ENCODE measurements at regions of chr9 and their contacts with region 1.

Region 1: GRCh38 chr9:94681508-94681907 is 42.2 kb upstream of the FBP1 start:
- DNase-seq: peak; percentile 84
- ATAC-seq: peak; percentile 96 to 99

Region 2: DNA sequence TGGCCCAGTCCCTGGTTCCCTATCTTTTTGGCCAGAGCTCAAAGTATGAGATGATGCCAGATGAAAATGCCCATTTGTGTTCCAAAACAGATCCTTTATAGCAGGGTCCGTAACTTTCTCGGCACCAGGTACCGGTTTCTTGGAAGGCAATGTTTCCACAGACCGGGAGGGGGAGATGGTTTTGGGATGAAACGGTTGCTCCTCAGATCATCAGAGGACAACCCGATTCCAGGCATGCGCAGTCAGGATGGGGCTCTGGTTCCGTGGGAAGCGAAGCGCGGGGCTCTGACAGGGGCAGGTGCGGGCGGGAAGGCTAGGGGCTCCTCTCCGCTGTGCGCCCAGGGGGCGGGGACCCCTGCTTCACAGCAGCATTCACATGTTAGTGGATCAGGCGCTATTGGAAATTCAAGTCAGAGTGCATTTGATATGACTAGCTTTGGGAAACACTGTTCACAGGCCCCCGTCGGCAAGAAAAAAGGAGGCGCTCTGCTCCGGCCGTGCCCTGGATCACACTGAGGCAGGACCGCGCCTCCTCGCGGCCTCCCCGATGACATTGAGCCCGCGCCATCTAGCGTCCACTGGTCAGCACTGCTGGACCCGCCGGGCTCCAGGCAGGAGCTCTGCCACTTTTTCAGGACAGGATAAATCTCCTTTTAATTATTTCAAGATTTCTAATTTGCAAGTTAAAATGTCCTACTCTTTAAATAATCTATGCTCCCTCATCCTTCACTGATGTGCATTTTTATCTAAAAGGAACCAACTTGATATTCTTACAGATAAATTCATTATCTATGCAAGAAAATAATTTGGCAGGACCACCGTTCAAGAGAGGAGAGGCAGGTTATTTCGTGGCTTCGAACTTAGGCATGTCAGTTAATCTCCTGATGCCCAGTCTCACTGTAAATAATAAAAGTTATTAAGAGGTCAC is 446.0 kb after region 1 on chr9:
- intact Hi-C with region 1: loop called (anchors 1 to 2 kb)
- DNase-seq: peak; percentile 91
- ATAC-seq: peak; percentile 91 to 93

Measured in left cardiac atrium (tissue), 4 donors.